ENCODE measurements at regions of chr13 and their contacts with region 1.

Region 1: DNA sequence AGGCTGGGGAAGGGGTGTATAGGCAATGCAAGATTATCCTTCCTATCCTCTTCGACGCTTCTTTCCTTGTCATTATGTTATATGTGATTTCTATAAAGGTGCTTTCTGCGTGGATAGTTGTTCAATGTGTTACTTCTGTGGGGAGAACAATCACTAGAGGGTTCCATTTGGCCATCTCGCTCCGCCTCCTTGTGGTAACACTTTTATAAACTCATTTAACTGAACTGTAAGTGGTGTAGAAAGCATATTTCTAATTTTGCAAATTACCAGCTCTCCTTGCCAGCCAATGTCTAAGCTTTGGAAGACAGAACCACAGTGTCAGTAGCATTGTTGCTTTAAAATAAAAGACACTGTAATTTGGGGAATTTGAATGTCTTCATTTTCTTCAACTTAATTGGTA is 1093.7 kb upstream of the MIR17HG start:
- DNase-seq: no peak
- H3K4me3 ChIP-seq: no peak overlapping the region
- H3K27ac ChIP-seq: no peak overlapping the region
- H3K27me3 ChIP-seq: no peaks in the 10 kb centered on the region
- CTCF ChIP-seq: no peak

Region 2: GRCh38 chr13:89740994-89741685 is 512.7 kb before region 1 on chr13:
- intact Hi-C with region 1: loop called in 1 of 2 experiments (anchors 10 kb)
- DNase-seq: no peak
- H3K4me3 ChIP-seq: no peak overlapping the region
- H3K27ac ChIP-seq: no peak overlapping the region
- H3K27me3 ChIP-seq: no peaks in the 10 kb centered on the region
- CTCF ChIP-seq: no peak

Region 3: GRCh38 chr13:90177512-90177911 is 76.3 kb before region 1 on chr13:
- intact Hi-C with region 1: no loop called
- DNase-seq: no peak
- H3K4me3 ChIP-seq: no peak overlapping the region
- H3K27ac ChIP-seq: no peak overlapping the region
- H3K27me3 ChIP-seq: no peaks in the 10 kb centered on the region
- CTCF ChIP-seq: no peak

Region 4: GRCh38 chr13:90375851-90376250 is 122.0 kb after region 1 on chr13:
- intact Hi-C with region 1: no loop called
- DNase-seq: no peak
- H3K4me3 ChIP-seq: no peak overlapping the region
- H3K27ac ChIP-seq: no peak overlapping the region
- H3K27me3 ChIP-seq: no peaks in the 10 kb centered on the region
- CTCF ChIP-seq: no peak

Measured in dorsolateral prefrontal cortex (tissue), 120 donors.